ENCODE measurements at regions of chr2 and their contacts with region 1.

Region 1: GRCh38 chr2:235116885-235117492 is 165.2 kb downstream of the SH3BP4 start:
- DNase-seq: no peak
- ATAC-seq: peak; percentile 55 to 80 (median 65)
- H3K4me3 ChIP-seq: no peak overlapping the region
- H3K27ac ChIP-seq: no peak overlapping the region
- H3K4me1 ChIP-seq: no peaks in the 10 kb centered on the region
- H3K27me3 ChIP-seq: no peaks in the 10 kb centered on the region
- CTCF ChIP-seq: peak; percentile 32 to 64 (median 52)

Region 2: DNA sequence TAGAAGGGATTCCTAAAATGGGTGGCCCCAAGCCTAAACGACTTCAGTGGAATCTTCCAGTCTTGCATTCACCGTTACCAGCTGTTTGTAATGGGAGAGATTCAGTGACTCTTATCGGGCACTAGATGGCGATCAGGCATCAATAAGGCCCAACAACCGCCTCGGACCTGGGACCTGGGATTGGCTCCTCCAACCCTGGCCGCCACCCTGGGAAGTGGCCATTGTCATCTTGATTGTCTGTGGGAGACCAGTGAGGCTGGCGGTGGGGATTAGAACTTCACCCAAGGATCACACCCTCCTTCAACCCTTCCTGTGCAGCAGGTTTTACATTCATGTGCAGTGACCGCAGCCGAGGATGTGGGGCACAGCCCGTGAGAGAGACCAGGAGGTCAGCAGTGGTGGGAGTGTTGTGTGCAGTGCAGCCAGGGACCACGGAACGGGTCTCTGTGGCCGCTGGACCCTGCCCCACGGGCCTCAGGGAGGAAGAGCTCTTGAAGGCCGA is 981.2 kb before region 1 on chr2:
- intact Hi-C with region 1: loop called in 1 of 3 experiments (anchors 10 kb)
- DNase-seq: peak in 5 of 6 donors; percentile 36 to 66 (median 49)
- ATAC-seq: peak; percentile 69 to 95 (median 90)
- H3K4me3 ChIP-seq: no peak overlapping the region
- H3K27ac ChIP-seq: no peak overlapping the region
- H3K4me1 ChIP-seq: peaks cover 0 to 4% (median 0%) of the 10 kb centered on the region in 3 donors
- H3K27me3 ChIP-seq: no peaks in the 10 kb centered on the region
- CTCF ChIP-seq: peak in 3 of 4 donors; percentile 48 to 62 (median 54)

Region 3: GRCh38 chr2:234550511-234551107 is 566.4 kb before region 1 on chr2:
- intact Hi-C with region 1: loop called in 2 of 3 experiments (anchors 5 kb)
- DNase-seq: peak in 5 of 6 donors; percentile 39 to 68 (median 57)
- ATAC-seq: peak; percentile 87 to 95 (median 93)
- H3K4me3 ChIP-seq: no peak overlapping the region
- H3K27ac ChIP-seq: no peak overlapping the region
- H3K4me1 ChIP-seq: no peaks in the 10 kb centered on the region
- H3K27me3 ChIP-seq: no peaks in the 10 kb centered on the region
- CTCF ChIP-seq: peak; percentile 86 to 96 (median 88)

Measured in pancreas (tissue), 10 donors.